Activated CD4-positive, alpha-beta memory T cell treated with anti-CD3 and anti-CD28 coated beads, Interleukin-2, amount 10 ng/mL, durations not matched to agents 7 days and 5 days (primary cell): ENCODE measurements at regions of chr6 and their contacts with region 1.

Region 1: DNA sequence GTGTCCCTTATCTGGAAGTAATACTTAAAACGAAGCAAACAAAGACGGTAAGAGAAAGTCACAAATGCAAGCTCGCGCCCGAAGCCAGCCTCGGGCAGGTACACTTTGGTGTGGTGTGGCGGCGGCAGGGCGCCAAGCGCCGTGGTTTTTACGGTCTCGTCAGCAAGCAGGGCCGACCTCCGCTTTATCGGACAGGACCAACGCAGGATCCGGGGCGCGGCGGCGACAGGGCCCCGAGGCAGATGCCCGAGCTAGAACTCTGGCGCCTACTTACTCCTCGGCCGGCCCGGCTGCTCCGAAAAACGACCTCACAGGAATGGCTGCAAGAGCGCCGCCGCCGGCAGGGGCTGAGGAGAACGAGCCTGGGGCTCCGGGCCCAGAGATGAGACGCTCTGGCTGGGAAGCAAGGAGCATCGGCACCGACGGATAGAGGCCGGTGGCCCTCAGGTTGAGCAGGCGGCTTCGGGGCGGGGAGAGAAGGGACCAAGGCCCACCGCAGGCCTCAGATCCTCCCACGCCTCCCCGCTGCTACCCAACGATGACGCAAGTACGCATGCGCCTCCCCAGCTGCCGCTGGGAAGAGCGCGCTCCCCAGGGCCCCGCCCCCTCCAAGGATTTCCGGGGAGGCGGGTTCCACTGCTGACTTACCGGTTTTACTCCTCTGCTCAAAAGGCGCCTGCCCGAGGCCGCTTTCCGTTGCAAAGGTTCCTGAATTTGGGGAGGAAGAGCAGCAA is 60.6 kb downstream of the FAM217A start:
- DNase-seq: peak; percentile 96
- H3K4me3 Mint-ChIP-seq: peak overlapping the region; percentile 90
- H3K27ac Mint-ChIP-seq: peak overlapping the region; percentile 97
- H3K4me1 Mint-ChIP-seq: peaks cover 68% of the 10 kb centered on the region
- H3K27me3 Mint-ChIP-seq: no peaks in the 10 kb centered on the region

Region 2: GRCh38 chr6:4030669-4031068 is 12.3 kb after region 1 on chr6:
- CTCF ChIA-PET with region 1: interaction called, 17 read pairs
- POLR2A ChIA-PET with region 1: interaction called, 16 read pairs
- DNase-seq: no peak
- H3K4me3 Mint-ChIP-seq: no peak overlapping the region
- H3K27ac Mint-ChIP-seq: peak overlapping the region; percentile 10
- H3K4me1 Mint-ChIP-seq: peaks cover 66% of the 10 kb centered on the region
- H3K27me3 Mint-ChIP-seq: no peaks in the 10 kb centered on the region

Region 3: GRCh38 chr6:4036581-4036980 is 18.2 kb after region 1 on chr6:
- CTCF ChIA-PET with region 1: interaction called, 17 read pairs
- POLR2A ChIA-PET with region 1: interaction called, 16 read pairs
- DNase-seq: no peak
- H3K4me3 Mint-ChIP-seq: no peak overlapping the region
- H3K27ac Mint-ChIP-seq: no peak overlapping the region
- H3K4me1 Mint-ChIP-seq: peaks cover 49% of the 10 kb centered on the region
- H3K27me3 Mint-ChIP-seq: no peaks in the 10 kb centered on the region

Region 4: GRCh38 chr6:4055420-4056041 is 37.2 kb after region 1 on chr6:
- CTCF ChIA-PET with region 1: interaction called, 14 read pairs
- POLR2A ChIA-PET with region 1: interaction called, 65 read pairs
- DNase-seq: peak; percentile 26
- H3K4me3 Mint-ChIP-seq: no peak overlapping the region
- H3K27ac Mint-ChIP-seq: peak overlapping the region; percentile 54
- H3K4me1 Mint-ChIP-seq: peaks cover 34% of the 10 kb centered on the region
- H3K27me3 Mint-ChIP-seq: no peaks in the 10 kb centered on the region

Region 5: DNA sequence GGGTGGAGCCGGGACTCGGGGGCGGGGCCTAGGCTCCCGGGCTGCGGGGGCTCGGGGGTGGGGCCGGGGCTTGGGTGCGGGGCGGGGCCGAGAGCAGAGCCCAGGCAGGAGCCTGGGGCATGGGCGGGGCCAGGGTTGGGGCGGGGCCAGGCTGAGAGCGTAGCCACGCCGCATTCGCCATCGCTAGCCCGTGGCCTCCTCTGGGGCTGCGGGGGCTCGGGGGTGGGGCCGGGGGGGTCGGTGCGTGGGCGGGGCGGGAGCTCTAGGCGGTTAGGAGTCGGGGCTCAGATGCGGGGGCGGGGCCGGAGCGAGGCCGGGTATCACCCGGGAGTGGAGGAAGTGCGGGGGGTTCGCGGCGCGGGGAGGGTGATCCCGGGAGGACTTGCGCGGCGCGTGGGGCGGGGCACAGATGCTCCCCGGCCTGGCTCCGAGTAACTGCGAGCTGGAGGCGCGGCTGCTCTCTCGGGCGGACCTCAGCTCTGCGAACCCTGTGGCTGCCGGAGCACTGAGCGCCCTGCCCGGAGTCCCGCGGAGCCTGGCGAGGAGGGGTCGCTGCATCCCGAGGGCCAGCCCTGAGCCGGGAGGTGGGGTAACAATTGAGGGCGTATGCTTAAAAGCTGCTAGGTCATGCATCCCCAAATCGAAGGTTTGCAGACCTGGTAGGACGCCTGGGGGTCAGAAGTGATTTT is 117.5 kb after region 1 on chr6:
- CTCF ChIA-PET with region 1: interaction called, 27 read pairs
- POLR2A ChIA-PET with region 1: interaction called, 49 read pairs
- DNase-seq: peak; percentile 95
- H3K4me3 Mint-ChIP-seq: peak overlapping the region; percentile 78
- H3K27ac Mint-ChIP-seq: peak overlapping the region; percentile 70
- H3K4me1 Mint-ChIP-seq: peaks cover 36% of the 10 kb centered on the region
- H3K27me3 Mint-ChIP-seq: no peaks in the 10 kb centered on the region

Region 6: DNA sequence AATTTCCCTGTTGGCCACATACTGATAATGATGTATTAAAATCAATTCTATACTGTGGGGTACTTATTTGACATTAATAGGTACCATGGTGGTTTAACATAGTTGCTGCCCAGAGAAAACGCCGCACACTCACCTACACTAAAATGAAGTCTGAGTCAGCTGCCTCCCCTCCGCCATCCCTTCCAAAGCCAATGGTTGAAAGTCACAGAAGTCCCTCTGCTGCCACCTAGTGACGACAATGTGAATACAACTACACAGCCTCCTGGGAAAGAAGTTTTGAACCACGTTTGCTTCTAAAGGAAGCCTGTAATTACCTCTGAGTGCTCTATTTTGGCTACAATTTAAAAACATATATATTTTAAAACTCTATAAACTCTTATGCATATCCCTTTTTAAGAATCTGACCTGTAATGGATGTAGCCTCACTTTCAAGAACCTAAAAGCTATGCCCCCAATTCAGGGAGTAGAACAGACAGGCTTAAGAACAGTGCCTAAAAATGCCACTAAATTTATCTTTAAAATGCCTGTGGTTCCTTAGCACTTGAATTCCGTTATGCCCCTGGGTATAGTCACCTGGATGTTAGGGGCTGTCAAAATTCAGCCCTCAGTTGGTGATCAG is 137.6 kb after region 1 on chr6:
- CTCF ChIA-PET with region 1: interaction called, 10 read pairs
- POLR2A ChIA-PET with region 1: interaction called, 3 read pairs
- DNase-seq: peak; percentile 82
- H3K4me3 Mint-ChIP-seq: no peak overlapping the region
- H3K27ac Mint-ChIP-seq: no peak overlapping the region
- H3K4me1 Mint-ChIP-seq: peaks cover 8% of the 10 kb centered on the region
- H3K27me3 Mint-ChIP-seq: peaks cover 3% of the 10 kb centered on the region

Region 7: DNA sequence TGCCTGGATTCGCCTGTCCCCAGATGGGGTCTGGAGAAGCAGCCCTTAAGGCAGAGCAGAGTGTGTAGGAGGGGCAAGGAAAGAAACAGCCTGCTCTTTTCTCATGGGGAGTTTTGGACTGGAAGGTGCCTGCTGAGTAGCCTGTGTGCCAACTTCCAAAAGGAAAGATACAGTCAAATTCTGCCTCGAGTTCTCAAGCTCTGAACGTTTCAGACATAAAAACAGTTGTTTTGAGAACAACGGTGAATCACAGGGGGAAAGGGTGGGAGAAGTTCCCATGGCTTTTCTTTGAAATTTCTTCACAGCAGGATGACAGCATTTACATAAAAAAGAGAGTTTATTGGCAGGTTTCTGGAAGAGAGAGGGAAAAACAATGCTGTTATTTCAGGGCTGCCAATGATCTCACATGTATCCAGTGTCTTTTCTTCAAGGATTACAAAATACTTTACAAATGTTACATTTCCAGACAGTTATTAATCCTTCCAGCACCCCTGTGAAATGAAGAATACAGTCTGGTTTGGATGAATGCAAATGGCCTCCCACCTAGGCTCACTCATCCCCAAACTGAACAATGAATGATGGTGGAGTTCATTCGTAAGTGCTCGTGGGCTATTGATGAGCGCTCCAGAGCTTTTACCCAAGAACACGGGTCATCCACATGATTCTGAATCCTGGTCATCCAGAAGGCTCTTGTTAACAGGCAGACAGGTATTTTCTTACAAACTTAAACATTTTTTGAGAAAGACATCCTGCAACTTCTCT is 150.9 kb after region 1 on chr6:
- CTCF ChIA-PET with region 1: no interaction called
- POLR2A ChIA-PET with region 1: no interaction called
- DNase-seq: no peak
- H3K4me3 Mint-ChIP-seq: no peak overlapping the region
- H3K27ac Mint-ChIP-seq: no peak overlapping the region
- H3K4me1 Mint-ChIP-seq: no peaks in the 10 kb centered on the region
- H3K27me3 Mint-ChIP-seq: no peaks in the 10 kb centered on the region

Region 8: DNA sequence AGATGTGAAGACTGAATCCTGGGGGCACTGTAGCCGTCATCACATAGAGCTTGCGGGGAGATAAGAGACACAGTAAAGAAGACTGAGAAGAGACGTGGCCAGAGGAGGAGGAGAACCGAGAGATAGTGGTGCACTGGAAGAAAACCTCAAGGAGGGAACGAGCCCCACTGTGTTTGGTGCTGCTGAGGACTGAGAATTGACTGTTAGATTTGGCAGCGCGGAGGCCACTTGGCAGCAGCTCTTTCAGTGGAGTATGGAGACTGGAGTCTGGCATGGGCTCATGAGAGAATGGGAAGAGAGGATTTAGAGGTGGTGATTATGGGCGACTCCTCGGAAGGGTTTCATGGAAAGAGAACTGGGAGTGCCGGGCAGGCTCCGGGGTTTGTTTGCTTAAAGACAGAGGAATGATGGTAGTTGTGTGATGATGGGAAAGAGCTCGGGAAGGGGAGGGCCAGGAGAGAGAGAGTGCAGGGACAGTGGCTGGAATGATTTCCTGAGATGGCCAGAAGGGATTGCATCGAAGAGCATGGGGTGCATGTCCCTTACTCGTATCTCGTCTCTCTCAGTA is 775.9 kb after region 1 on chr6:
- CTCF ChIA-PET with region 1: no interaction called
- POLR2A ChIA-PET with region 1: no interaction called
- DNase-seq: no peak
- H3K4me3 Mint-ChIP-seq: no peak overlapping the region
- H3K27ac Mint-ChIP-seq: no peak overlapping the region
- H3K4me1 Mint-ChIP-seq: peaks cover 22% of the 10 kb centered on the region
- H3K27me3 Mint-ChIP-seq: no peaks in the 10 kb centered on the region